Activated CD4-positive, alpha-beta T cell treated with anti-CD3 and anti-CD28 coated beads, Interleukin-2, amount 10 ng/mL, durations not matched to agents 24 days and 14 days (primary cell): ENCODE measurements at regions of chr11 and their contacts with region 1.

Region 1: GRCh38 chr11:10653926-10654810 is 39.4 kb downstream of the IRAG1 start:
- DNase-seq: peak; percentile 80
- H3K4me3 Mint-ChIP-seq: no peak overlapping the region
- H3K27ac Mint-ChIP-seq: no peak overlapping the region
- H3K4me1 Mint-ChIP-seq: peaks cover 25% of the 10 kb centered on the region
- H3K27me3 Mint-ChIP-seq: no peaks in the 10 kb centered on the region

Region 2: GRCh38 chr11:10405855-10406592 is 248.1 kb before region 1 on chr11:
- intact Hi-C with region 1: loop called (anchors 1 kb)
- DNase-seq: peak; percentile 83
- H3K4me3 Mint-ChIP-seq: no peak overlapping the region
- H3K27ac Mint-ChIP-seq: no peak overlapping the region
- H3K4me1 Mint-ChIP-seq: peaks cover 18% of the 10 kb centered on the region
- H3K27me3 Mint-ChIP-seq: peaks cover 3% of the 10 kb centered on the region

Region 3: GRCh38 chr11:10413268-10413667 is 240.9 kb before region 1 on chr11:
- intact Hi-C with region 1: loop called (anchors 1 kb)
- DNase-seq: peak; percentile 83
- H3K4me3 Mint-ChIP-seq: no peak overlapping the region
- H3K27ac Mint-ChIP-seq: no peak overlapping the region
- H3K4me1 Mint-ChIP-seq: peaks cover 32% of the 10 kb centered on the region
- H3K27me3 Mint-ChIP-seq: peaks cover 10% of the 10 kb centered on the region

Region 4: GRCh38 chr11:10725114-10725906 is 71.1 kb after region 1 on chr11:
- intact Hi-C with region 1: loop called (anchors 1 kb)
- DNase-seq: peak; percentile 71
- H3K4me3 Mint-ChIP-seq: peak overlapping the region; percentile 65
- H3K27ac Mint-ChIP-seq: peak overlapping the region; percentile 88
- H3K4me1 Mint-ChIP-seq: peaks cover 22% of the 10 kb centered on the region
- H3K27me3 Mint-ChIP-seq: peaks cover 37% of the 10 kb centered on the region